H1 (cell line): ENCODE measurements at regions of chr15 and their contacts with region 1.

Region 1: GRCh38 chr15:68650901-68651709 is 72.3 kb downstream of the CORO2B start:
- DNase-seq: peak; percentile 72 to 100
- H3K4me3 ChIP-seq: peak overlapping the region in 2 of 4 experiments; percentile 19 to 33; a peak in 2 of 8 replicates
- H3K27ac ChIP-seq: no peak overlapping the region
- H3K4me1 ChIP-seq: peaks cover 6 to 19% (median 11%) of the 10 kb centered on the region in 4 experiments
- H3K27me3 ChIP-seq: no peaks in the 10 kb centered on the region
- CTCF ChIP-seq: peak; percentile 96 to 98 (median 97)
- EP300 ChIP-seq: no peak
- POLR2A ChIP-seq: no peak
- RAD21 ChIP-seq: peak; percentile 81 to 90

Region 2: GRCh38 chr15:68277603-68278344 is 373.3 kb before region 1 on chr15 and contains the start of gene FEM1B:
- CTCF ChIA-PET with region 1: no interaction called
- POLR2A ChIA-PET with region 1: no interaction called
- DNase-seq: peak; percentile 75 to 92
- H3K4me3 ChIP-seq: peak within 1 kb of the TSS; percentile 78 to 99 (median 89)
- H3K27ac ChIP-seq: peak within 1 kb of the TSS; percentile 94
- H3K4me1 ChIP-seq: peaks cover 5 to 18% (median 14%) of the 10 kb centered on the region in 4 experiments; a peak in 6 of 7 replicates
- H3K27me3 ChIP-seq: no peaks in the 10 kb centered on the region
- CTCF ChIP-seq: peak in 1 of 3 experiments; percentile 8; a peak in 1 of 4 replicates
- EP300 ChIP-seq: peak in 1 of 2 experiments; percentile 68; a peak in 1 of 3 replicates
- POLR2A ChIP-seq: peak; percentile 54 to 88; a peak in 2 of 3 replicates
- RAD21 ChIP-seq: no peak
- total RNA-seq, gene FEM1B: 72.9 and 83.8 TPM in 2 replicates

Region 3: GRCh38 chr15:68526269-68526668 is 124.8 kb before region 1 on chr15:
- CTCF ChIA-PET with region 1: no interaction called
- POLR2A ChIA-PET with region 1: no interaction called
- DNase-seq: no peak
- H3K4me3 ChIP-seq: no peak overlapping the region
- H3K27ac ChIP-seq: no peak overlapping the region
- H3K4me1 ChIP-seq: no peaks in the 10 kb centered on the region
- H3K27me3 ChIP-seq: no peaks in the 10 kb centered on the region; a peak in 1 of 7 replicates
- CTCF ChIP-seq: no peak
- EP300 ChIP-seq: no peak
- POLR2A ChIP-seq: no peak
- RAD21 ChIP-seq: no peak

Region 4: DNA sequence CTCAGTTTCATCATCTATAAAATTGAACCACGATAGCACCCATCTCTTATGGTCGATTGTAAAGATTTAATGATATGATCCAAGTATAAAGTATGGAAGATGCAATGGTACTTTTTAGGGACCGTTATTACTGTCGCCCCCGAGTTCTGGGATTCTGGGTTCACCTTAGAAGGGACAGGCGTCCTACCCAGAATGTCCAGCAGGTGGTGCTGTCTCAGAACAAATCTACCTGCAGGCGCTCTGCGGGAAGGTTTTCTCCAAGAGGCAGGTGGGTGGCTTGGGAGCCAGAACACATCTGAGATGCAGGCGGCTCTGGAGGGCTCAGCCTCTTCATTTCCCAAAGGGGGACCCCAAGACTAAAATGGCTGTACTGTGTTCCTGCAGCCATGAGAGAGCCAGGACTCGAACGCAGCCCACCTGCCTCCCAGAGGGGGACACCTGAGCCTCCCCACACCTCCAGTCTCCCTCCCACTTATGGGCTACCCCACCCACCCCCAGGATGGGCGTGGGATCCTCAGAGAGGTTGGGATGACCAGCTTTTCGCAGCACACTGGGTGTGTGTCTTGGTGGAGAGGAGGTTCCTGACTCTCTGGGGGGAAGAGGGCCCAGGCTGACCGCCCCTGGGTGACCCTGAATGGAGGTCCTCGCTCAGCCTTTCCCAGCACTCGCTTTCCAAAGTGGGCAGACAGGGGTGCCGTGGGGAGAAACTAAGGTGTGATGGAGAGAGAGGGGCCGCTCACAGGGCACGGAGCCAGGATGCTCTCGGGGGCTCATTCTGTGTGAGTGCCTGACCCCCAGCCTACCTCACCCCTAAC is 100.4 kb before region 1 on chr15:
- CTCF ChIA-PET with region 1: interaction called, 721 read pairs
- POLR2A ChIA-PET with region 1: no interaction called
- DNase-seq: peak; percentile 44 to 97
- H3K4me3 ChIP-seq: no peak overlapping the region
- H3K27ac ChIP-seq: no peak overlapping the region
- H3K4me1 ChIP-seq: no peaks in the 10 kb centered on the region
- H3K27me3 ChIP-seq: no peaks in the 10 kb centered on the region; a peak in 1 of 7 replicates
- CTCF ChIP-seq: peak; percentile 73 to 96 (median 87)
- EP300 ChIP-seq: no peak
- POLR2A ChIP-seq: no peak
- RAD21 ChIP-seq: peak; percentile 92 to 97

Region 5: DNA sequence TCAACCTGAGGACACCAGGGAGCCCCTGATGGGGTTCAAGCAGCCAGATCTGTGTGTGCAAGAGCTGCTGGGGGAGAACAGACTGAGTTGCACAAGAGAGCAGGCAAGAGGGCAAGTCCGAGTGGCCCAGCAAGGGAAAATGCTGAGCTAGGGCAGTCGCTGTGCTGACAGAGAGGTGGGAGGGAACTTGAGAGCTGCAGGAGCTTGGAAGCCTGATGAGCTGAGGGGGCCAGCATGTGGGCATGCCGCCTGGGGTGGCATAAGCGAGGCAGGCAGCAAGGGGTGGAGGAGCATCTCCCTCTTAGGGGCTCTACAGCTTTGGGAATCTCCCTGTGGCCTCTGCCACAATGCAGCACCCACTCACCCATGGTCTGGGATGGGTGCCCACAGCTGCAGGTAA is 77.1 kb before region 1 on chr15:
- CTCF ChIA-PET with region 1: interaction called, 28 read pairs
- POLR2A ChIA-PET with region 1: no interaction called
- DNase-seq: no peak
- H3K4me3 ChIP-seq: no peak overlapping the region
- H3K27ac ChIP-seq: no peak overlapping the region
- H3K4me1 ChIP-seq: peaks cover 16 to 55% (median 34%) of the 10 kb centered on the region in 4 experiments
- H3K27me3 ChIP-seq: peaks cover 0 to 22% (median 15%) of the 10 kb centered on the region in 4 experiments; a peak in 5 of 7 replicates
- CTCF ChIP-seq: no peak
- EP300 ChIP-seq: no peak
- POLR2A ChIP-seq: no peak
- RAD21 ChIP-seq: no peak

Region 6: GRCh38 chr15:68608206-68608843 is 42.8 kb before region 1 on chr15:
- CTCF ChIA-PET with region 1: interaction called, 23 read pairs
- POLR2A ChIA-PET with region 1: no interaction called
- DNase-seq: no peak
- H3K4me3 ChIP-seq: no peak overlapping the region
- H3K27ac ChIP-seq: no peak overlapping the region
- H3K4me1 ChIP-seq: peaks cover 6 to 21% (median 11%) of the 10 kb centered on the region in 4 experiments; a peak in 6 of 7 replicates
- H3K27me3 ChIP-seq: no peaks in the 10 kb centered on the region; a peak in 2 of 7 replicates
- CTCF ChIP-seq: no peak
- EP300 ChIP-seq: no peak
- POLR2A ChIP-seq: no peak
- RAD21 ChIP-seq: no peak

Region 7: DNA sequence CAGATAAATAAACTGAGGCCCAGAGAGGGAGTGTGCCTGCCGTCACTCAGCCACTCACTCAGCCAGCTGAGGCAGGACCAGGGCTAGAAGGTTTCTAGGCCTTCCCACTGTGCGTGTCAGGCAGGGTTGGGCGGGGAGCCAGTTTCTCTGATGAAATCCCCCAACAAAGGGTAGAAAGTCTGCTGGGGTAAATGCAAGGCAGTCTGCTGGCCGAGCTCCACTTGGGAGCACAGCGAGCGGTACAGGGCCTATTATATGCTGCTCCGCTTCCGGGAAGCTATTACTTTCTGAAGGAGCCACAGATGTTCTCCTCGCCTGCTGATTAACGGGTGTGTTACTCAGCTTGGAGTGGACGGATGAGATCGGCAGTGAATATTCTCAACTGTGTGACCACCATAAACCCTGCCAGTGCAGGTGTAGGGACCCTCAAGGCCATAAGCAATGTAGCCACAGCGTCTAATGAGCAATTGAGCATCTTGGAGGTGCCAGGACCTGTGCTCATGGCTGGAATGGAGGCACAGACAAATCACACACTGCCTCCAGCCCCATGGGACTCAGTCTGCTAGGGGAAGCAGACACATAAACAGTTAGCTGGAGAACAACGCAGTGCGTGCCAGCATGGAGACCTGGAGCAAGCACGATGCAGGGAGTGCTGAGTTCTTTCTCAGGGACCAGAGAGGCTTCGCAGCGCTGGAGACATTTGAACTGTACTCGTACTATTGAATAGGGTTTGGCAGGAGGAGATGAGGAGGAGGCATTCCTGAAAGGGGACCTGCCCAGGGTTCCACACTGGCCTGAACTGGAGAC is 30.2 kb before region 1 on chr15:
- CTCF ChIA-PET with region 1: interaction called, 569 read pairs
- POLR2A ChIA-PET with region 1: no interaction called
- DNase-seq: no peak
- H3K4me3 ChIP-seq: no peak overlapping the region
- H3K27ac ChIP-seq: 0 out of 2 replicates have a peak overlapping the region, but pooled peaks have one; percentile 12
- H3K4me1 ChIP-seq: peaks cover 0 to 5% (median 1%) of the 10 kb centered on the region in 4 experiments; a peak in 2 of 7 replicates
- H3K27me3 ChIP-seq: no peaks in the 10 kb centered on the region
- CTCF ChIP-seq: no peak
- EP300 ChIP-seq: no peak
- POLR2A ChIP-seq: no peak
- RAD21 ChIP-seq: no peak

Region 8: DNA sequence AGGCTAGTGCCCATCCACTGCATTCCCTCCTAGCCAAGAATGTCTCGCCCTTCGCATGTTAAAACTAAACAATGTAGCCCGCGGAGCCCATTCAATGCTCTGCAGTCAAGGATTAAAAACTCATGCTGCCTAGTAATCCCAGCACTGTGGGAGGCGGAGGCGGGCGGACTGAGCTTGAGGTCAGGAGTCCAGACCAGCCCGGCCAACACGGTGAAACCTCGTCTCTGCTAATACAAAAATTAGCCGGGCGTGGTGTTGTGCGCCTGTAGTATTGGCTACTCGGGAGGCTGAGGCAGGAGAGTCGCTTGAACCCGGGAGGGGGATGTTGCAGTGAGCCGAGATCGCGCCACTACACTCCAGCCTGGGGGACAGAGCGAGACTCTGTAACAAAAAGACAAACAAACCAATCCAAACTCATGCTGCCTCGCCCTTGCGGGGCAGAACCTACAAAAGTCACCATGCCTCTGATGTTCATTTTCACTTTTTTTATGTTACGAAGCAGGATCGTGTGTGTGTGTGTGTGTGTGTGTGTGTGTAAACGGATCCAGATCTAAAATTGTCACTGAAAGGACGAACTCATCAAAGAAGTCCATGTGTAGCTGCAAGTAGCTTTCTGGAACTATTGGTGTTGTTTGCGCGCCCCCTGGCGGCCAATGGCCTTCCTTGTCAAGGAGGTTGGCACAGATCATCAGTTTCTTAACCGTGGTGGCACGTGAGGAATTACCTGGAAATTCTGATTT is 224.4 kb after region 1 on chr15:
- CTCF ChIA-PET with region 1: interaction called, 11 read pairs
- POLR2A ChIA-PET with region 1: no interaction called
- DNase-seq: peak; percentile 91 to 97
- H3K4me3 ChIP-seq: peak overlapping the region; percentile 24 to 65 (median 50); a peak in 7 of 8 replicates
- H3K27ac ChIP-seq: no peak overlapping the region
- H3K4me1 ChIP-seq: peaks cover 2 to 3% (median 2%) of the 10 kb centered on the region in 4 experiments; a peak in 4 of 7 replicates
- H3K27me3 ChIP-seq: peaks cover 0 to 8% (median 1%) of the 10 kb centered on the region in 4 experiments; a peak in 4 of 7 replicates
- CTCF ChIP-seq: peak; percentile 83 to 90 (median 89)
- EP300 ChIP-seq: no peak
- POLR2A ChIP-seq: no peak; a peak in 1 of 3 replicates
- RAD21 ChIP-seq: peak; percentile 94 to 95